ENCODE measurements at regions of chr4 and their contacts with region 1.

Region 1: GRCh38 chr4:140756319-140757231 is at the start of gene TBC1D9:
- DNase-seq: peak; percentile 91
- ATAC-seq: peak; percentile 84
- total RNA-seq, gene TBC1D9: 11.1 TPM

Region 2: DNA sequence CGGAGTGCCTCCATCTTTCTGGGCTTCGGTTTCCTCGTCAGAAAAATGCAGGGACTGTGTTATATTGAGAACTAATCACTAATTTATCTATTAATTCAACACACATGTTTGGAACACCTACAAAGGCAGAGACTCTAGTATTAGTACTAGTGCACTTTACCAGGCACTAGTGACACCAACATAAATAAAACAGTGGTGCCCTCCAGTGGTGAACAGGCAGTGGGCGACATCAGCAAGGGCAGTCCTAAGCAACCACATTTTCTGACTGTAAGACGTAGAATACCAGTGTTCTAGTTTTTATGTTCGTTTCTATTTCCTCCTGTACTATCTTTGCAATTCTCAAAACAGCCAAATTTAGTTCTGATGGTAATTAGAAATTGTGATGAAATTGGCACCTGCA is 118.7 kb before region 1 on chr4:
- intact Hi-C with region 1: loop called (anchors 5 kb)
- DNase-seq: no peak
- ATAC-seq: peak; percentile 42

Region 3: GRCh38 chr4:140691357-140691756 is 65.2 kb before region 1 on chr4:
- intact Hi-C with region 1: loop called (anchors 1 kb)
- DNase-seq: no peak
- ATAC-seq: peak; percentile 77

Region 4: GRCh38 chr4:140947507-140947906 is 190.9 kb after region 1 on chr4:
- intact Hi-C with region 1: no loop called
- DNase-seq: no peak
- ATAC-seq: no peak

Measured in Right ventricle myocardium inferior (tissue), 1 donor.